Breast epithelium (tissue), 4 donors: ENCODE measurements at regions of chr20 and their contacts with region 1.

Region 1: DNA sequence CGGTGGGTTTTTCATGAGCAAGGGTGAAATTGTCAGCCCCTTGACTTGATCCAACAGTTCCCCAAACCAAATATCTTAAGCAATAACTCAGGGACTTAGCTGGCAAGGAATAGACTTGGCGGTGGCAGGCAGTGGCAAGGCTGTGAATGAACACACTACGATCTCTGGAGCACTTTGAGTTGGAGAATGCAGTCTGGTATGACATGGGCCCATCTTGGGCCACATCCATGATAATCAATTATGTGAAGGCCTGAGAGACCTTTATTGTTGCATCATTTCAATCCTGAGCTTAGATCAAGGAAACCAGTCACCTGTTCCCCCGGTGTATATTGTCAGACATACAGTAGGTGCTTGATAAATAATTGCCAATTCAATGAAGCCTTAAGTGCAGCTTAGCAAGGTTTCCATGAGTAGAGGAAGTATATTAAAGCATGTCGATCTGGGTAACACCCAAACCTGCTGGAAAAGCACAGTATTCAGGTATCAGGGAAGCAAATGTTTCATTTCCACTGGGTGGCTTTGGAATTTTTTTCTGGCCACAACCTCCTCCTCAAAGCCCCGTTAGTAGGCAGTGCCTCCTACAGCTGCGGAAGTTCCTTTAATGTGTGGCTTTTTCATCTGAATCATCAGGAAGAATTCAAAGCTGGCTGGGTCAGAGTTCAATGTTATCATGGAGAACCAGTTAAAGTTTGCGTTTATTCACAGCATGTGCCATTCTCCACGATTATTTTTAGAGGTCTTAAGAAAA is 10.2 kb downstream of the CASS4 start:
- DNase-seq: no peak
- H3K4me3 ChIP-seq: no peak overlapping the region
- H3K27ac ChIP-seq: no peak overlapping the region
- H3K4me1 ChIP-seq: no peaks in the 10 kb centered on the region
- H3K27me3 ChIP-seq: no peaks in the 10 kb centered on the region
- CTCF ChIP-seq: no peak
- POLR2A ChIP-seq: no peak

Region 2: GRCh38 chr20:56376331-56376730 is 45.9 kb before region 1 on chr20:
- intact Hi-C with region 1: loop called (anchors 2 kb)
- DNase-seq: no peak
- H3K4me3 ChIP-seq: no peak overlapping the region
- H3K27ac ChIP-seq: no peak overlapping the region
- H3K4me1 ChIP-seq: no peaks in the 10 kb centered on the region
- H3K27me3 ChIP-seq: no peaks in the 10 kb centered on the region
- CTCF ChIP-seq: no peak
- POLR2A ChIP-seq: no peak

Region 3: DNA sequence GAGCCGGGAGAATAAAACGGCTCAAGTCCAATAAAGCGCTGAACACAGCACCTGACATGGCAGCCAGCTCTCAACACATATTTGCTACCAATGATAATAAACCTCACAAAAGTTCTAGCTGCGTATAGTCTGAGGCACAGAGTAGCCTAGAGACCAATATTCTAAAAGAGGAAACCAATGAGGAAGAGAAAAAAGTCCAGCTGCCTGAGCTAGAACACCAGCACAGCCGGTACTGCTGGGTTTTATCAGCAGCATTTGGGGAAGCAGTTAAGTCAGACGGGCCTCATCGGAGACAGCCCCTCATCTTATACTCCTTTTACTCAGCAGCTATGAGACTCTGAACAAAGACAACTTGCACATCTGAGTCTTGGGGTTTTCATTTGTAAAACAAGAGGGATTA is 43.7 kb after region 1 on chr20:
- intact Hi-C with region 1: no loop called
- DNase-seq: no peak
- H3K4me3 ChIP-seq: no peak overlapping the region
- H3K27ac ChIP-seq: no peak overlapping the region
- H3K4me1 ChIP-seq: peaks cover 6 to 14% of the 10 kb centered on the region in 2 donors
- H3K27me3 ChIP-seq: no peaks in the 10 kb centered on the region
- CTCF ChIP-seq: no peak
- POLR2A ChIP-seq: no peak

Region 4: GRCh38 chr20:57435498-57436222 is 1013.4 kb after region 1 on chr20:
- intact Hi-C with region 1: loop called (anchors 5 kb)
- DNase-seq: peak; percentile 97 to 99
- H3K4me3 ChIP-seq: peak overlapping the region in 1 of 3 donors; percentile 25
- H3K27ac ChIP-seq: peak overlapping the region; percentile 68 to 91
- H3K4me1 ChIP-seq: no peaks in the 10 kb centered on the region
- H3K27me3 ChIP-seq: no peaks in the 10 kb centered on the region
- CTCF ChIP-seq: no peak
- POLR2A ChIP-seq: no peak